H1 (cell line): ENCODE measurements at regions of chr16 and their contacts with region 1.

Region 1: GRCh38 chr16:5466551-5466950 is 369.0 kb upstream of the EEF2KMT start:
- DNase-seq: no peak
- H3K4me3 ChIP-seq: no peak overlapping the region
- H3K27ac ChIP-seq: no peak overlapping the region
- H3K4me1 ChIP-seq: no peaks in the 10 kb centered on the region; a peak in 1 of 7 replicates
- H3K27me3 ChIP-seq: no peaks in the 10 kb centered on the region; a peak in 2 of 7 replicates
- CTCF ChIP-seq: peak; percentile 50 to 74 (median 69); a peak in 3 of 4 replicates
- EP300 ChIP-seq: no peak
- POLR2A ChIP-seq: no peak
- RAD21 ChIP-seq: peak; percentile 52 to 67

Region 2: DNA sequence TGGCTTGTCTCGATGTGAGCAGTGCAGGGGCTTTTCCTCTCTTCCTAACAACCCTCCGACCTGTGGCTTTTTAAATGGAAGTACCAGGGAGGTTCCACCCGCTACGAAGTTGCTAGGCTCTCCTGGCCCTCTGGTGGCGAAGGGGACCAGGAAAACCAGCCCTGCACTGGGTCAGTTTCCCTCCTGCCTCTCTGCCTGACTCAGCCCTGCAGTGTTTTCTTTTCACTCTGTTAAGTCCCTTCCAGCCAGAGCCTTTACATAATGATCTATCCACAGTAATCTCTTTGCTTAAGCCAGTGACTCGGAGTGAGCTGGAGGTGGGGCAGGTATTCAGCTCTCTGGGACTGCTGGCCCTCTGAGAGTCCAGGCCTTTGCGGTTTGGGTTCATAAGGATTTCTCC is 37.6 kb before region 1 on chr16:
- CTCF ChIA-PET with region 1: interaction called, 19 read pairs
- POLR2A ChIA-PET with region 1: no interaction called
- DNase-seq: peak in 1 of 2 experiments; percentile 68
- H3K4me3 ChIP-seq: no peak overlapping the region
- H3K27ac ChIP-seq: no peak overlapping the region
- H3K4me1 ChIP-seq: peaks cover 3 to 8% (median 6%) of the 10 kb centered on the region in 4 experiments; a peak in 6 of 7 replicates
- H3K27me3 ChIP-seq: 0 out of 7 replicates have a peak, but pooled peaks cover 0 to 2% (median 0%) of the 10 kb centered on the region in 4 experiments
- CTCF ChIP-seq: peak; percentile 70 to 84 (median 83)
- EP300 ChIP-seq: no peak
- POLR2A ChIP-seq: no peak
- RAD21 ChIP-seq: peak; percentile 60 to 73

Region 3: GRCh38 chr16:5450409-5451104 is 16.0 kb before region 1 on chr16:
- CTCF ChIA-PET with region 1: interaction called, 12 read pairs
- POLR2A ChIA-PET with region 1: no interaction called
- DNase-seq: peak; percentile 62 to 64
- H3K4me3 ChIP-seq: peak overlapping the region in 2 of 4 experiments; percentile 20 to 30; a peak in 4 of 8 replicates
- H3K27ac ChIP-seq: peak overlapping the region; percentile 67; the same call in 1 of the 2 replicates
- H3K4me1 ChIP-seq: peaks cover 20 to 26% (median 21%) of the 10 kb centered on the region in 4 experiments
- H3K27me3 ChIP-seq: no peaks in the 10 kb centered on the region; a peak in 1 of 7 replicates
- CTCF ChIP-seq: no peak
- EP300 ChIP-seq: no peak
- POLR2A ChIP-seq: no peak; a peak in 2 of 3 replicates
- RAD21 ChIP-seq: no peak

Region 4: GRCh38 chr16:5479926-5480325 is 13.4 kb after region 1 on chr16:
- CTCF ChIA-PET with region 1: interaction called, 21 read pairs
- POLR2A ChIA-PET with region 1: no interaction called
- DNase-seq: no peak
- H3K4me3 ChIP-seq: no peak overlapping the region
- H3K27ac ChIP-seq: no peak overlapping the region
- H3K4me1 ChIP-seq: peaks cover 3 to 9% (median 5%) of the 10 kb centered on the region in 4 experiments; a peak in 5 of 7 replicates
- H3K27me3 ChIP-seq: no peaks in the 10 kb centered on the region
- CTCF ChIP-seq: no peak
- EP300 ChIP-seq: no peak
- POLR2A ChIP-seq: no peak
- RAD21 ChIP-seq: no peak

Region 5: GRCh38 chr16:5551909-5552308 is 85.4 kb after region 1 on chr16:
- CTCF ChIA-PET with region 1: no interaction called
- POLR2A ChIA-PET with region 1: no interaction called
- DNase-seq: no peak
- H3K4me3 ChIP-seq: no peak overlapping the region
- H3K27ac ChIP-seq: no peak overlapping the region
- H3K4me1 ChIP-seq: no peaks in the 10 kb centered on the region
- H3K27me3 ChIP-seq: no peaks in the 10 kb centered on the region
- CTCF ChIP-seq: no peak
- EP300 ChIP-seq: no peak
- POLR2A ChIP-seq: no peak
- RAD21 ChIP-seq: no peak